ENCODE measurements at regions of chr12 and their contacts with region 1.

Region 1: GRCh38 chr12:109775172-109775881 is 57.9 kb downstream of the TRPV4 start:
- DNase-seq: peak; percentile 76 to 90 (median 88)
- ATAC-seq: peak; percentile 84 to 86
- H3K4me3 ChIP-seq: no peak overlapping the region
- H3K27ac ChIP-seq: no peak overlapping the region
- H3K4me1 ChIP-seq: no peaks in the 10 kb centered on the region
- H3K27me3 ChIP-seq: no peaks in the 10 kb centered on the region

Region 2: DNA sequence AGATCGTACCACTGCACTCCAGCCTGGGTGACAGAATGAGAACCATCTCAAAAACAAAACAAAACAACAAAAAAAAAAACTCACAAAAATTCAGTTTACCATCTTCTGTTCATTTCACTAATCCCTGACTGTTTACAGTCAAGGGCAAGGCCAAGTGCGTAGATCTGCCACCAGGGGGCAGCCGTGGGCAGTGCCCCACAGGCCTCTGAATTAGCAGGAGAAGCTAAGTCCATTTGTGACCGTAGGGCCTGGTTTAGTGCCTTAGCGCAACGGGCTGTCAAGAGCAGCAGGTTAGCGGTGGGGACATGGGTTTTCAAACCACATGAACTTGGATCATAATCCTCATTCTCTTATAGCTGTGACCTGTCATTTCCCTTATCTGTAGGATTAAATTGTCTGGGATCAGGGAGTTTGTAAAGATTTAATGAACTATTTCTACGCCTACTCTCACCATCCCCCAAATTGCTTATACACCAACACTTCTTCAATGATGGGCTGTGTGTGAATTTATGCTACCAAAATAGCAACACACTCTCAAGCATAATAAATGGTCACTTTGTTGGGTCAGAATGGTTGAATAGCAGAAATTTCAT is 347.2 kb before region 1 on chr12:
- intact Hi-C with region 1: loop called in 2 of 4 experiments (anchors 10 kb)
- DNase-seq: peak; percentile 80 to 93 (median 93)
- ATAC-seq: peak; percentile 87 to 89
- H3K4me3 ChIP-seq: no peak overlapping the region
- H3K27ac ChIP-seq: no peak overlapping the region
- H3K4me1 ChIP-seq: no peaks in the 10 kb centered on the region
- H3K27me3 ChIP-seq: no peaks in the 10 kb centered on the region

Region 3: DNA sequence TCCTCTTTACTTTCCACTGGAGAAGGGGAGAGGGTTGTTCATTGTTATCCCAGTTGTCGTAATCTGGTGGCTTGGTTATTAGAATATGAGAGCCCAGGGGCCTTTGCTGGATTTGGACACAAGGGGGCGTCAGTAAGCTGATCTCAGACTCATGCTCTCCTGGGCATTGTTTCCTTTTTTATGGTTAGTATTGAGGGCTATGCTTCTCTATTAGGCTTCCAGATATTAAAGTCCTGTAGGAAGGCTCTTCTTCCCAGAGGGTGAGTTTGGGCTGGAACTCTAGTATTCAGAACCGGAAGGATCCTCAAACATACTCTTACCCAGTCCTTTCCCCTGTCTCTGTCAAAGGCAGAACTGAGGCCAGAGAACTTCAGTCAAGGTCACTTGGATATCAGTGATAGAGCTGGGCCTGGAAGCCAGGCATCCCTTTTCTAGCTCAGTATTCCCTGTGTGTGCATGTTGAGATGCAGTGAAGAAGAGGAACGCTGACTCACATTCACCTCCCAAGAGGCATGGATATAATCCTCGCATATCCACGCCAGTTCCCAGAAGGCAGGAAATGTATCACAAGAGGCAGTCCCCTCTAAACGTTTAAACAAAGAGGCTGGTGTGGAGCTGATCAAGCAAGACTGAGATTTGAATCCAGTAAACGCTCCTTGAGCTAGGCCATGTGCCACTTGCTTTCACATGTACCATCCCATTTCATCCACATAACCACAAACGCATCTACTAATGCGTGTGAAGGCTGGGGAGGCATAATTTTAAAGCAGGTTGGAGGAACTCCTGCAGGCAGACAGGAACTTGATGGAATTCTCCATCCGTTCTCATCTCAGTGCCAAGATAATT is 256.3 kb before region 1 on chr12:
- intact Hi-C with region 1: loop called (anchors 1 to 10 kb)
- DNase-seq: peak; percentile 62 to 88 (median 76)
- ATAC-seq: peak; percentile 64 to 86
- H3K4me3 ChIP-seq: no peak overlapping the region
- H3K27ac ChIP-seq: peak overlapping the region; percentile 87
- H3K4me1 ChIP-seq: peaks cover 4% of the 10 kb centered on the region
- H3K27me3 ChIP-seq: no peaks in the 10 kb centered on the region

Region 4: DNA sequence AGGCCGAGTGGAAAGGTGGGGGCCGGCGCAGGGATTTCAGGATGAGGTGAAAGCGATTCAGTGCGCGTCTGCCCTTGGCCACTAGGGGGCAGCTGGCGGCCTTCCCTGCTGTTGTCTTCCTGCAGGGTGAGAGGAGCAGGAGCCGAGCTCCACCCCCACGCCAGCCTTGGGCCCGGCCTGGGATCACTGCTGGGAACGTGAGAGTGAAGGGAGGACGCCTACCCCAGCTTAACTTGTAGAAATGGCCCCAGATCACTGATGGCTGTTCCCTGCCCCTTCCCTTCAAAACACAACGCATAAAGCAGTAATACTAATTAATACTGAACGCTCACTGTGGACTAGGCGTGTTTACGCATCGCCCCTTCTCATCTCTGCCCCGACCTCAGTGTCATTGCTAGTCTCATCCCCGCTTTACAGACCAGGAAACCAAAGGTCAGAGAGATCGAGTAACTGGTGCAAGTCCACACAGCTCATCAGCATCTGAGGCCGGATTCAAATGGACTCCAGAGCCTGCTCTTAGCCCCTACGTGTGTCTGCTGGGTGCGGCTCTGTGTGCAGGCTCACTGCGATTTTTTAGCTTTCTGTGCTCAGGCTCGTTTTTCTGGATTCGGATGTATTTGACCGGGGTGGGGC is 177.4 kb before region 1 on chr12:
- intact Hi-C with region 1: loop called (anchors 2 to 5 kb)
- DNase-seq: peak; percentile 89 to 96 (median 95)
- ATAC-seq: peak; percentile 91 to 93
- H3K4me3 ChIP-seq: no peak overlapping the region
- H3K27ac ChIP-seq: no peak overlapping the region
- H3K4me1 ChIP-seq: peaks cover 2% of the 10 kb centered on the region
- H3K27me3 ChIP-seq: no peaks in the 10 kb centered on the region

Region 5: DNA sequence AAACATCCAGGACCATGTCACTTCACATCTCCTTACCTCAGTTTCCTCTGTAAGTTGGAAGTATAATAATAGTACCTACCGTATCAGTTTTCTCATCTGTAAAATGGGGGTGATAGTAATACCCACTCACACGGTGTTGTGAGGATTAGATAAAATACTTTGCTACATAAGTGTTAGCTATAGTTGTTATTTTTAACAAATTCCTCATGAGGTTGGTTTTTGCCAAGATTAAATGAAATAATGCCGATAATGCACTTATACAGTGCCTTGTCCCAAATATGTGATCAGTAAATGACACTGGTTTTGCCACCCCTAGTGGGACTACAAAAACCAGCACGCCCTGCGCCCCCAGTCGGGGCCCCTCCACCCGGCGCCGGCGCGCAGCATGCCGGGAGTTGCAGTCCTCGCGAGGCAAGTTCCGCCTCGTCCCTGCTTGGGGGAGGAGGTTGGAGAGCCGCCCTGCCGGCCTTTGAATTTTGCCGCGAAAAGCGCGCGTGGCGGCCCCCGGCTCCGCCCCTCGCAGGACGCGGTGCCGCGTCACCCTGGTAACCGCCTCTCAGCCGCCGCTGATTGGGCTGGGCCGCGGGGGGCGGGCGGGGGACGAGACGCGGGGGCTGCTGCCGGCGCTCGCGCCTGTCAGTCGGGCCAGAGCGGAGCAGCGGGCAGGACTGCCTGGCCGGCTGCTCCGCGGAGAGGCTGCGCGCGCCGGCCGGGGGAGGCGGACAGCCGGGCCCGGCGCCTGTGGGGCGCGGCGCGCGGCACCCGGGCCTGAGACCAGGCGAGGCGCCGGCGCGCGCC is 61.9 kb before region 1 on chr12 and contains the start of gene FAM222A:
- intact Hi-C with region 1: loop called in 1 of 4 experiments (anchors 10 kb)
- DNase-seq: peak; percentile 97 to 99 (median 99)
- ATAC-seq: peak; percentile 96 to 97
- H3K4me3 ChIP-seq: peak within 1 kb of the TSS; percentile 84
- H3K27ac ChIP-seq: peak within 1 kb of the TSS; percentile 57
- H3K4me1 ChIP-seq: peaks cover 10% of the 10 kb centered on the region
- H3K27me3 ChIP-seq: no peaks in the 10 kb centered on the region
- total RNA-seq, gene FAM222A: 9.3 to 16.4 (median 10.0) TPM

Region 6: GRCh38 chr12:109863847-109864712 is 88.8 kb after region 1 on chr12:
- intact Hi-C with region 1: no loop called
- DNase-seq: no peak
- ATAC-seq: peak; percentile 75 to 79
- H3K4me3 ChIP-seq: no peak overlapping the region
- H3K27ac ChIP-seq: no peak overlapping the region
- H3K4me1 ChIP-seq: peaks cover 5% of the 10 kb centered on the region
- H3K27me3 ChIP-seq: no peaks in the 10 kb centered on the region

Measured in right cardiac atrium (tissue), 5 donors.